Vagina (tissue), 2 donors: ENCODE measurements at regions of chr11 and their contacts with region 1.

Region 1: DNA sequence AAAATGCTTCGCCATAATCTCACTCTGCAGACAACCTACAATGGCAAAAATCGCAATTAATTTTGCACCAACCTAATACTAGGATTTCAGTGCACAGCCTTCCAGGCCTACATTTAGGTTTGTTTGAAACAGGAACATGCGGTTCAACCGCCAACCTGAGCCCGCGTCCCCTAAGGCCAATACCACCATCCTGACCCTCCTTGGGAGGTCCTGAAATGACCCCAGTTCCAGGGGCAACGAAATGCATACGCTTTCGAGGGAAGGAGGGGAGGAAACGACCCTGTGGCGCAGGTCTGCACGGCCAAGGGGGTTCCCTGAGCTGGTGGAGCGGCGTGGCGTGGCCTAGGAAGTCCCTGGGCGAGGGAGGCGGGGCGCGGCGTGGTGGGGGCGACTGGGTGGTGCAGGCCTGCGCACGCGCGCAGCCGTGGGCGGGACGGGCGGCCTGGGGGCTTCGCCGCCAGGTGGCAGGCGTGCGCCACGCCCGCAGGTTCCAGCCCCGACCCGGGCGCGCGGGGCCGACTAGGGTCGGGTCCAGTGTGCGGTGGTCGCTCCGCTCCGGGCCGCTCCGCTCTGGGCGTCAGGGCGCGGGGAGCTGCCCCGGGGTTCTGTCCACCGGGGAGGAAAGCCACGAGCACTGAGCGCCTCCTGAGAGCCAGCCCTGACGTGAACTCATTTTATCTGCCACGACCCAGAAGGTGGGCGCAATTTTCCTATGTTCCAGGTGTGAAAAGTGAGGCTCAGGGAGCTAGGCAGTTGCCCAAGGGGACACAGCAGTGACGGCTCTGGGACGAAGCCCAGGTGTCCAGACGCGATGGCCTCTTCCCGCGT is 94.1 kb downstream of the SWAP70 start:
- DNase-seq: no peak
- H3K4me3 ChIP-seq: peak overlapping the region; percentile 65 to 75
- H3K27ac ChIP-seq: peak overlapping the region; percentile 99
- H3K4me1 ChIP-seq: peaks cover 81% of the 10 kb centered on the region
- H3K27me3 ChIP-seq: no peaks in the 10 kb centered on the region
- CTCF ChIP-seq: peak; percentile 63 to 80 (median 68)
- POLR2A ChIP-seq: peak in 1 of 2 donors; percentile 30

Region 2: GRCh38 chr11:9613118-9613829 is 144.7 kb before region 1 on chr11:
- intact Hi-C with region 1: loop called (anchors 10 kb)
- DNase-seq: peak in 1 of 2 donors; percentile 97
- H3K4me3 ChIP-seq: peak overlapping the region; percentile 47 to 50
- H3K27ac ChIP-seq: peak overlapping the region; percentile 99
- H3K4me1 ChIP-seq: peaks cover 15% of the 10 kb centered on the region
- H3K27me3 ChIP-seq: no peaks in the 10 kb centered on the region
- CTCF ChIP-seq: peak; percentile 87 to 92 (median 88)
- POLR2A ChIP-seq: peak in 1 of 2 donors; percentile 43

Region 3: GRCh38 chr11:9972989-9973388 is 215.0 kb after region 1 on chr11:
- intact Hi-C with region 1: loop called (anchors 5 kb)
- DNase-seq: no peak
- H3K4me3 ChIP-seq: no peak overlapping the region
- H3K27ac ChIP-seq: peak overlapping the region; percentile 6
- H3K4me1 ChIP-seq: no peaks in the 10 kb centered on the region
- H3K27me3 ChIP-seq: no peaks in the 10 kb centered on the region
- CTCF ChIP-seq: peak in 2 of 3 experiments; percentile 49 to 65
- POLR2A ChIP-seq: no peak